ENCODE measurements at regions of chr17 and their contacts with region 1.

Region 1: DNA sequence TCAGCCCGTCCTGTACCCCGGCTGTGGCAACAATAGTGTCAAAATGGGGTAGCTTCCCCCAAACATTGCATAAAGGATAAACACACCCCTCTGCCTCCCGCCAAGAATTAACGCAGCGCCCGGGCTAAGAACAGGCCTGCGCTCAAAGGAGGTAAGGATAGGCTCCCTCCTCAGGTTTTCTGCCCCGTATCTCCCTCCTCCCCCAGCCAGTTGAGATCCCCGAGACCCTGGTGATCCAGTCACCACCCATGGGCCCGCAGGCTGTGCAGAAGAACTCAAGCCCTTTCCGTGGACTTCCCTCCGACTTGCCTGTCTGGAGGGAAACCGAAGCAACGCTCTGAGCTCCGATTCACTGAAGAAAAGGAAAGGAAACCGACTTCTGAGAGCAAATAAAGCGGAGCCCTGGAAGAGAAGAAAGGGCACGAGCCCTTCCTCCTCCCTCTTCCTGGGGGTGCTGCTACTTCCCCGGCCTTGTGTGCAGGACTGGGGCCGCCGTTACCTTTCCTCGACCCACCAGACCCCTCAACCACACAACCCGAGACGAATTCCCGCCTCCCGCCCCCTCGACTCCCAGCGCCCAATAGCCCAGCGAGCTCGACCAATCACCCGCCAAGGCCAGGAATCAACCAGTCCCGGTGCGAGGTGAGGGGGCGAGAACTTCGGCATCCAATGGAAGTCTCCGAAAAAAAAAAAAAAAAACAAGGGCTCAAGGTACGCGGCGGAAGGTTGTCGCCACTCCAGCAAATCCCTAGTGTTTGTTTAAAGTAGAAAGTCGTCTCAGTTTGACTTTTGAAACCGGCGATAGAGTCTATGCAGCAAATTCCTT is at the start of gene BRIP1:
- DNase-seq: peak; percentile 93

Region 2: DNA sequence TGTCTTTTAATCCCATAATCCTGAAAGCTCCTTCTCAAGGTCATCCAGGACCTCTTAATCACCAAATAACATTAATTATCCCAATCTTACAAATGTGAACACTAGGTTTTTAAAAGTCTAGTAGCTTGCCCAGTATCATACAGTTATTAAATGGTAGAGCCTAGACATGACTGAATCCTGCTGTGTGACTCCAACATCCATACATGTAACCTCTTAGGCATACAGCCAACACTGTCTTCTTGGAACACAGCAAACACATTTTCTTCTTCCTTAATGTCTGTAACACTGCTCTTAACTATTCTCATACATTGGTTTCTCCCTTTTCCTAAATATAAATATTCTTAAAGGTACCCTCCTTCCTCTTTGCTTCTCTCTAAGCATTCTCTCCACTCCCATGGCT is 13.5 kb before region 1 on chr17:
- CTCF ChIA-PET with region 1: no interaction called
- POLR2A ChIA-PET with region 1: interaction called, 12 read pairs
- DNase-seq: no peak

Region 3: GRCh38 chr17:61875285-61875684 is 12.1 kb after region 1 on chr17:
- CTCF ChIA-PET with region 1: no interaction called
- POLR2A ChIA-PET with region 1: interaction called, 13 read pairs
- DNase-seq: no peak

Region 4: DNA sequence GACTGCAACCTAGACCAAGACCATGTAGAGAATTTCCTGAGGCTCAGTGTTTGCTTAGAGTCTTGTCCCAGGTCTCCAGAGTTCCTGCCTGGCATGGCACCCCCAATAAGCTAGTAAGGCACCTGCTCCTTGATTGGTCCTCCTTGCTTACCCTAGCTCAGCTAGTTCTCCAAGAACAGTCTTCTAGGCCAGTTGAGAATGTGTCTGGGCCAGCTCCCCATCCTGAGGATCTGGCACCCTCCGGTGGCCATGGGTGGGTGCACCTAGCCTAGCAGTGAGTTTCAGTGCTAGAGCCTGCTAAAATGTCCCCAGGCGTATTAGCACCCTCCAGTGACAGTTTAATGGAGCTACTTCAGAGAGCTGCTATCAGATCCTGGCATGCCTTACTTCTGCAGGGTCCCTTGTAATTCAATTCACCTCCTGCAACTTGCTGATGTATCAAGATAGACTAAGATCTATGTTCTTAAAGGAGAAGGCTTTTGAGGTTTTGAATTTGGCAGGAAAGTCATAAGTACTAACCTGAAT is 246.3 kb after region 1 on chr17:
- CTCF ChIA-PET with region 1: interaction called, 3 read pairs
- POLR2A ChIA-PET with region 1: interaction called, 10 read pairs
- DNase-seq: peak; percentile 84

Measured in HEK293T (cell line).